B cell (primary cell): ENCODE measurements at regions of chr15 and their contacts with region 1.

Region 1: GRCh38 chr15:78437762-78438302 is at the start of gene IREB2:
- DNase-seq: peak; percentile 99
- ATAC-seq: peak; percentile 91
- H3K4me3 ChIP-seq: peak within 1 kb of the TSS; percentile 71 to 98 (median 96)
- H3K4me3 Mint-ChIP-seq: peak within 1 kb of the TSS; percentile 99
- H3K27ac ChIP-seq: peak within 1 kb of the TSS; percentile 83 to 95
- H3K27ac Mint-ChIP-seq: peak within 1 kb of the TSS; percentile 98
- H3K4me1 ChIP-seq: peaks cover 17 to 21% of the 10 kb centered on the region in 2 donors
- H3K4me1 Mint-ChIP-seq: peaks cover 37% of the 10 kb centered on the region
- H3K27me3 ChIP-seq: no peaks in the 10 kb centered on the region
- H3K27me3 Mint-ChIP-seq: peaks cover 7% of the 10 kb centered on the region
- CTCF ChIP-seq: no peak
- total RNA-seq, gene IREB2: 88.4 and 92.1 TPM in 2 replicates

Region 2: DNA sequence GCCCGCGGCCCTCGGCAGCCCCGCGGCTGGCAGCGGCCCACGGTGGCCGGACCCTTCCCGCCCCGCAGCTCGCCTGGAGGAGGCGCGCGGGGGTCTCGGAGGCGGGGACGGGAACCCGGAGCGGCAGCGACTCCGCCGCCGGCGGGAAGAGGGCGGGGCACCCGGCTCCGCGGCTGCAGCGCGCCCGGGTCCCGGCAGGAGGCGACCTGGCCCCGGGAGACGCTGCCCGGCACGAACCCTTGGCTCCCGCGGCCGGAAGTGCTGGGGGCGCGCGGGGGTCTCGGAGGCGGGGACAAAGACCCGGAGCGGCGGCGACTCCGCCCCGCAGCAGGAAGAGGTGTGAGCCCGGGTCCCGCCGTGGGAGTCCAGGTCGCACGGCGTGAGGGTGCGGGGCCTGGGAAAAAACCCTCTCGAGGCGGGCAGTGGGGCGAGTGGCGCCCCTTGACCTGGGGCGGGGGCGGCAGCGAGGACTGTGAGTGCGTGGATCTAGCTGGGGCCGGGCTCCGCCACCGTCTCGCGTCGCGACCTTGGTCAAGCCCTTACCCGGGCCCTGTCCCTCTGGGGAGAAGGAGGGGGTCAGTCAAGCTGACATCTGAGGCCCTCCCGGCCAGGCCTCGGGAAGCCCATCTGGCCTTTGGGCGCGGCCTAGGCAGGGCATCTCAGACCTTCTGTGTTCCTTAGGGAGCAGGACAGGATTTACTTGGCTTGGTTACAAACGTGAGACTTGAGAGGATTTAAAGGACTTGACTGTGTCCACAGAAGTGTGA is 306.4 kb before region 1 on chr15 and contains the start of gene CIB2:
- CTCF ChIA-PET with region 1: no interaction called
- POLR2A ChIA-PET with region 1: no interaction called
- intact Hi-C with region 1: loop called (anchors 2 kb)
- DNase-seq: peak; percentile 86
- ATAC-seq: peak; percentile 94
- H3K4me3 ChIP-seq: peak within 1 kb of the TSS; percentile 43 to 77 (median 72)
- H3K4me3 Mint-ChIP-seq: peak within 1 kb of the TSS; percentile 89
- H3K27ac ChIP-seq: peak within 1 kb of the TSS; percentile 69 to 86
- H3K27ac Mint-ChIP-seq: peak within 1 kb of the TSS; percentile 88
- H3K4me1 ChIP-seq: peaks cover 12 to 14% of the 10 kb centered on the region in 2 donors
- H3K4me1 Mint-ChIP-seq: peaks cover 14% of the 10 kb centered on the region
- H3K27me3 ChIP-seq: no peaks in the 10 kb centered on the region
- H3K27me3 Mint-ChIP-seq: no peaks in the 10 kb centered on the region
- CTCF ChIP-seq: peak; percentile 83
- total RNA-seq, gene CIB2: 3.2 and 3.8 TPM in 2 replicates

Region 3: DNA sequence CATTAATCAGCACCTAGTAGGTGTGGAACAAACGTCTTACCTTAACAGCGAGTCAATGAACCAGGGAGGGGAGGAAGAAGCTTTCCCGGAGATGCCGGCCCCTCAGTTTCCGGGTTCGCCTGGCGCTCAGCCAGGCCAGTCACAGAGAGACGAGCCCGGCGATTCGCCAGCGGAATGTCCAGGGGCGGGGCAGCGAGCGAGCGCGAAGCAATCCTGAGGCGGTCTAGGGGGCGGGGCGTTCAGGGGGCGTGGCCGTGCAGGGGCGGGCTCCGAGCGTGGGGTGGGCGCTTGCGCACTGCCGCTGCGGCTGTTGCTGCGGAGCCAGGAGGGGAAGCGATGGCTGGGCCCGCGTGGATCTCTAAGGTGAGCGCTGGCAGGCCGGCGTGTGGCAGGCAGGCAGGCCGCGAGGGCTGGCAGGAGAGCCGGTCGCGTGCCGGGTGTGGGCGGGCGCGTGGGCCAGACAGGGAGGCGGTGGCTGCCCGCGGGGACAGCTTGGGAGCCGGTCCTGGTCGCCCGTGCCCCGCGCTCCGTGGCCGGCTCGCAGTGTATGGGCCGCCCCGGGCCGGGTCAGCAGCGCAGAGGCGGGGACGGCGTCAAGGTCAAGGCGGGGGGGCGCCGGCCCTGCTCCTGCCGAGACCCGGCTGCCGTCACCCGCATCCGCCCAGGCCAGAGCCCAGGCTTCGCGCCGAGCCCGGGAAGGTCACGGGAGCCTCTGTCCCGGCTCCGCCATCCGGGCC is 288.6 kb before region 1 on chr15 and contains the start of gene IDH3A:
- CTCF ChIA-PET with region 1: no interaction called
- POLR2A ChIA-PET with region 1: no interaction called
- intact Hi-C with region 1: loop called (anchors 1 kb)
- DNase-seq: peak; percentile 99
- ATAC-seq: peak; percentile 97
- H3K4me3 ChIP-seq: peak within 1 kb of the TSS; percentile 63 to 93 (median 81)
- H3K4me3 Mint-ChIP-seq: peak within 1 kb of the TSS; percentile 98
- H3K27ac ChIP-seq: peak within 1 kb of the TSS; percentile 32 to 81
- H3K27ac Mint-ChIP-seq: peak within 1 kb of the TSS; percentile 93
- H3K4me1 ChIP-seq: peaks cover 20 to 25% of the 10 kb centered on the region in 2 donors
- H3K4me1 Mint-ChIP-seq: peaks cover 41% of the 10 kb centered on the region
- H3K27me3 ChIP-seq: no peaks in the 10 kb centered on the region
- H3K27me3 Mint-ChIP-seq: no peaks in the 10 kb centered on the region
- CTCF ChIP-seq: no peak
- total RNA-seq, gene IDH3A: 64.5 and 71.7 TPM in 2 replicates

Region 4: DNA sequence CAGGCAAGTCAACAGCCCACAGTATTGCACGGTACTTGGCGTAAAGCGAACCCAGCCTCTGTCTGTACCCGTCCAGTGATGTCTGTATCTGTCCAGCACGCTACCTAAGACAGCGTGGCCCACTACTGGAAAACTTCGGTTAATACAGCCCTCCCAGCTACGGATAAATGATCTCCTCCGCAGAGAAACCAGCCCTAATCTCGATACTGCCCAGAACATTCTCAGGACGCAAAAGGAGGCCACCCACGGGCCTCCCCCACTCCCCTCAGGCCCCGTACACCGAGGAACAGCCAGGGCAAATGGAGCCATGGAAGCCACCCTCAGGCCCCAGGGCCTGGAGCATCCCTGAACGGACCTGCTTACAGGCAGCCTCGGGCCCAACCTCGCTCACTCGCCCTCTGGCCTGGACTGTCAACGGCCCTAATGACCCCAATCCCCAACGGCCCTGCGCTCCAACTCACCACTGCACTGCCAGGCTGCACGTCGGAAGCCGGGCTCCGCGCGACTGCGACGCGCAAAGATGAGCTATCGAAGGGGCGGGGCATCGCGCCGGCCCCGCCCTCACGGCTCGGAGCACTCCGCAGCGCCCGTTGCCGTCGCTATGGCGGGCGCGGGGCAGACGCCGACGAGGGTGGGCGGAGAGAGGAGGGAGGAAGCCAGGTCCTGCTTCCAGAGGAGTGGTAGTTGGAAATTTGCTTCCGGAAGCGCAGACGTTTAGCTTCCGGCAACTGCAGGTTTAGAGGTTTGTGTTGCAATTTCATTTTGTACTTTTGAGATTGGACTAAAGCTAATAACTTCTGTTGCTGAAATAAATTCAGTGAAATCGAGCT is 138.5 kb before region 1 on chr15 and contains the start of gene SKIC8:
- CTCF ChIA-PET with region 1: no interaction called
- POLR2A ChIA-PET with region 1: interaction called, 3 read pairs
- intact Hi-C with region 1: loop called (anchors 1 kb)
- DNase-seq: peak; percentile 94
- ATAC-seq: peak; percentile 98
- H3K4me3 ChIP-seq: peak within 1 kb of the TSS; percentile 64 to 85 (median 75)
- H3K4me3 Mint-ChIP-seq: peak within 1 kb of the TSS; percentile 100
- H3K27ac ChIP-seq: peak within 1 kb of the TSS; percentile 41 to 74
- H3K27ac Mint-ChIP-seq: peak within 1 kb of the TSS; percentile 93
- H3K4me1 ChIP-seq: peaks cover 10 to 11% of the 10 kb centered on the region in 2 donors
- H3K4me1 Mint-ChIP-seq: peaks cover 21% of the 10 kb centered on the region
- H3K27me3 ChIP-seq: peaks cover 0 to 2% (median 0%) of the 10 kb centered on the region in 4 experiments
- H3K27me3 Mint-ChIP-seq: no peaks in the 10 kb centered on the region
- CTCF ChIP-seq: no peak
- total RNA-seq, gene SKIC8: 34.4 and 40.2 TPM in 2 replicates

Region 5: GRCh38 chr15:78422571-78423340 is 15.1 kb before region 1 on chr15:
- CTCF ChIA-PET with region 1: interaction called, 15 read pairs
- POLR2A ChIA-PET with region 1: no interaction called
- intact Hi-C with region 1: no loop called
- DNase-seq: peak; percentile 71
- ATAC-seq: peak; percentile 80
- H3K4me3 ChIP-seq: no peak overlapping the region
- H3K4me3 Mint-ChIP-seq: no peak overlapping the region
- H3K27ac ChIP-seq: no peak overlapping the region
- H3K27ac Mint-ChIP-seq: no peak overlapping the region
- H3K4me1 ChIP-seq: no peaks in the 10 kb centered on the region
- H3K4me1 Mint-ChIP-seq: peaks cover 2% of the 10 kb centered on the region
- H3K27me3 ChIP-seq: peaks cover 0 to 5% (median 0%) of the 10 kb centered on the region in 4 experiments
- H3K27me3 Mint-ChIP-seq: peaks cover 34% of the 10 kb centered on the region
- CTCF ChIP-seq: peak; percentile 96

Region 6: DNA sequence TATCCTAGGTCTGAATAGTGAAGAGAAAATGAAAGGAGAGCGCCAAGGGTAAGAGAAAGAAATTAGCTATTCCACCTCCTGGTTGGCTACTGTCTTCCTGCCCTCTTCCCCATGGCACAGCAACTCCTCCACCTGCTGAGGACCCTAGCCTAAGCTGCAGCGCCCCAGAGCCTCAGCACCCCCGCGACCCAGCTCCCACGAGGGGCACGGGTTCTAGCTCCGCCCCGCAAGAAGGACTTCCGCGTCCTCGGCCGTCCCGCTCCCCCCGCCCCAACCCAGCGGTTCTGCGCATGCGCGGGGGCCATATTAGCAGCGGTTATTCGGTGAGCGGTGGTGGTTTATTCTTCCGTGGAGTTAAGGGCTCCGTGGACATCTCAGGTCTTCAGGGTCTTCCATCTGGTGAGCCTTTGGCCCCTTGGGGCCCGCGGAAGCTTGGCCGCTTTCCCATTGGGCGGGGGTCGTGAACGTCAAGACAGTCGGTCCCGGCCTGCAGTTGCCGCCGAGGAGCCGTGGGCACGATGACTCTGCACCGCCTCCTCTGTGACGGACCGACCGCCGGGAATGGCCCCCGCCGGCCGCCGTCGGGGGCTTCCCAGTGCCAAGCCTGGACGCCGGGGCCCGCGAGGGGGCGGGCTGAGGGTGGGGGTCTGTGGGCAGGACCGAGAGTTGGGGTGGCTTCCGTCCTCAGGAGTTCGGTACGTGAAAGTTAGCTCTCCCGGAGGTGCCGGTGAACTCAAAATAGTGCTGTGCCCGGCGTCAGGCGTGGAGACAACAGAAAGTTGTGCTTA is 102.5 kb after region 1 on chr15 and contains the start of gene PSMA4:
- CTCF ChIA-PET with region 1: interaction called, 7 read pairs
- POLR2A ChIA-PET with region 1: interaction called, 11 read pairs
- intact Hi-C with region 1: loop called (anchors 1 kb)
- DNase-seq: peak; percentile 97
- ATAC-seq: peak; percentile 87
- H3K4me3 ChIP-seq: peak within 1 kb of the TSS; percentile 89 to 99 (median 97)
- H3K4me3 Mint-ChIP-seq: peak within 1 kb of the TSS; percentile 98
- H3K27ac ChIP-seq: peak within 1 kb of the TSS; percentile 83 to 88
- H3K27ac Mint-ChIP-seq: peak within 1 kb of the TSS; percentile 100
- H3K4me1 ChIP-seq: peaks cover 12 to 23% of the 10 kb centered on the region in 2 donors
- H3K4me1 Mint-ChIP-seq: peaks cover 27% of the 10 kb centered on the region
- H3K27me3 ChIP-seq: no peaks in the 10 kb centered on the region
- H3K27me3 Mint-ChIP-seq: no peaks in the 10 kb centered on the region
- CTCF ChIP-seq: peak; percentile 38
- total RNA-seq, gene PSMA4: 94.9 and 95.9 TPM in 2 replicates

Region 7: DNA sequence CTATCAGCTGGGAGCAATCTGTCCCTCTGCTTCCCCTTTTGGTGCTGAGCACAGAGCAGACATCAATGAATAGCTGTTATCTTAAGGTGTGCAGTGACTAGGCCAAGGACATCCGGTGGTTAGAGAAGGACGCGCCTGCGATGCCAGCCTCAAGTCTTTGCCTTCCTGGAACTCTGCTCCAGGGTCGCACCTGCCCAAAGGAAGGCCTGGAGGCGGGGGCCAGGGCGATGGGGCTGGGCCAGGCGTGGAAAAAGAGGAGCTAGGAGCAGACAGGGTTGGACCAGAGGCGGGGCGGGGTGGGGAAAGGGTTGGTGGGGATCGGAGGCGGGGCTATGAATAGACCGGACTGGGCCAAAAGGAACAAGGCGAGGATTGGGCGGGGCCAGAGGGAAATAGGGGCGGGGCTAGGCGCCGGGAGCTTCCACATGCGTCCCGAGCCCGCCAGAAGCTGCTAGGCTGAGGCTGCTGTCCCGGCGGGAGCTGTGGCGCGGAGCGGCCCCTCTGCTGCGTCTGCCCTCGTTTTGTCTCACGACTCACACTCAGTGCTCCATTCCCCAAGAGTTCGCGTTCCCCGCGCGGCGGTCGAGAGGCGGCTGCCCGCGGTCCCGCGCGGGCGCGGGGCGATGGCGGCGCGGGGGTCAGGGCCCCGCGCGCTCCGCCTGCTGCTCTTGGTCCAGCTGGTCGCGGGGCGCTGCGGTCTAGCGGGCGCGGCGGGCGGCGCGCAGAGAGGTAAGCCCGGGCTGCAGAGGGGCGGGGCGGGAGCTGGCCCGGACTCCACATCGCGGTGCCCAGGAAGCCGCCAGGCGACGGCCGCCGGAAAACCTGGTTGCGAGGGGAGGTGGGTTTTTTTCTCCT is 127.5 kb after region 1 on chr15 and contains the start of gene CHRNA5:
- CTCF ChIA-PET with region 1: no interaction called
- POLR2A ChIA-PET with region 1: interaction called, 7 read pairs
- intact Hi-C with region 1: loop called (anchors 1 kb)
- DNase-seq: peak; percentile 81
- ATAC-seq: peak; percentile 95
- H3K4me3 ChIP-seq: peak within 1 kb of the TSS; percentile 54 to 80 (median 68)
- H3K4me3 Mint-ChIP-seq: peak within 1 kb of the TSS; percentile 89
- H3K27ac ChIP-seq: peak within 1 kb of the TSS in 1 of 2 donors; percentile 30
- H3K27ac Mint-ChIP-seq: peak within 1 kb of the TSS; percentile 82
- H3K4me1 ChIP-seq: peaks cover 16 to 17% of the 10 kb centered on the region in 2 donors
- H3K4me1 Mint-ChIP-seq: peaks cover 26% of the 10 kb centered on the region
- H3K27me3 ChIP-seq: peaks cover 0 to 12% (median under 1%) of the 10 kb centered on the region in 4 experiments
- H3K27me3 Mint-ChIP-seq: peaks cover 6% of the 10 kb centered on the region
- CTCF ChIP-seq: no peak
- total RNA-seq, gene CHRNA5: 1.2 and 2.0 TPM in 2 replicates

Region 8: GRCh38 chr15:78909791-78910228 is 472.0 kb after region 1 on chr15:
- CTCF ChIA-PET with region 1: no interaction called
- POLR2A ChIA-PET with region 1: no interaction called
- intact Hi-C with region 1: no loop called
- DNase-seq: peak; percentile 71
- ATAC-seq: peak; percentile 50
- H3K4me3 ChIP-seq: no peak overlapping the region
- H3K4me3 Mint-ChIP-seq: no peak overlapping the region
- H3K27ac ChIP-seq: no peak overlapping the region
- H3K27ac Mint-ChIP-seq: peak overlapping the region; percentile 18
- H3K4me1 ChIP-seq: no peaks in the 10 kb centered on the region
- H3K4me1 Mint-ChIP-seq: peaks cover 18% of the 10 kb centered on the region
- H3K27me3 ChIP-seq: no peaks in the 10 kb centered on the region
- H3K27me3 Mint-ChIP-seq: no peaks in the 10 kb centered on the region
- CTCF ChIP-seq: peak; percentile 79